ENCODE measurements at regions of chr15 and their contacts with region 1.

Region 1: GRCh38 chr15:92881802-92882696 is 18.1 kb upstream of the CHD2 start:
- DNase-seq: peak; percentile 99
- H3K4me3 Mint-ChIP-seq: peak overlapping the region; percentile 87
- H3K27ac Mint-ChIP-seq: peak overlapping the region; percentile 91
- H3K4me1 Mint-ChIP-seq: peaks cover 38% of the 10 kb centered on the region
- H3K27me3 Mint-ChIP-seq: no peaks in the 10 kb centered on the region

Region 2: DNA sequence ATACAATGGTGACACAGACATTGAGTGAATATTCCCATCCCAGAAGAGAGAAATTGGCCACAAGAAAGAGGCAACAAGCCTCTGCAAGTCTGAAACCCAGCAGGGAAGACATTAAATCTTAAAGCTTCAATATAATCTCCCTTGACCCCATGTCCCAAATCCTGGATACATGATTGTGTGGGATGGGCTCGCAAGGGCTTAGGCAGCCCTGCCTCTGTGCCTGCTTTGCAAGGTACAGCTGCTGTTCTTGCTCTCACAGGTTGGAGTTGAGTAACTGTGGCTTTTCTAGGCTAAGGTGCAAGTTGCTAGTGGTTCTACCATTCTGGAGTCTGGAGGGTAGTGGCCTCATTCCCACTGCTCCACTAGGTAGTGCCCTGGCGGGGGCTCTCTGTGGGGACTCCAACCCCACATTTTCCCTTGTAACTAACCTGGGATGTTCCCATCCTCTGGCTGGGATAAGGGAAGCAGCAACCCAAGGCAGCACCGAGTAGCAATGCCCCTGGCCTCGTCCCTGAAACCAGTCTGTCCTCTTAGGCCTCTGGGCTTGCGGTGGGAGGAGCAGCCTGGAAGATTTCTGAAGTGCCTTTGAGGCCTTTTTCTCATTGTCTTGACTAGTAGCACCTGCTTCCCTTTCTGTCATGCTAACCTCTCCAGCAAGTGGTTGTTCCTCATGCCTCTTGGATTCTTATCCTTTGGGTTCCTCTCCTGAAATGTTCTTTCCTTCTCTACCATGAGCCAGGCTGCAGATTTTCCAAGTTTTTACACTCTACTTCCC is 316.5 kb before region 1 on chr15:
- CTCF ChIA-PET with region 1: no interaction called
- POLR2A ChIA-PET with region 1: no interaction called
- DNase-seq: no peak
- H3K4me3 Mint-ChIP-seq: no peak overlapping the region
- H3K27ac Mint-ChIP-seq: no peak overlapping the region
- H3K4me1 Mint-ChIP-seq: no peaks in the 10 kb centered on the region
- H3K27me3 Mint-ChIP-seq: peaks cover 14% of the 10 kb centered on the region

Region 3: DNA sequence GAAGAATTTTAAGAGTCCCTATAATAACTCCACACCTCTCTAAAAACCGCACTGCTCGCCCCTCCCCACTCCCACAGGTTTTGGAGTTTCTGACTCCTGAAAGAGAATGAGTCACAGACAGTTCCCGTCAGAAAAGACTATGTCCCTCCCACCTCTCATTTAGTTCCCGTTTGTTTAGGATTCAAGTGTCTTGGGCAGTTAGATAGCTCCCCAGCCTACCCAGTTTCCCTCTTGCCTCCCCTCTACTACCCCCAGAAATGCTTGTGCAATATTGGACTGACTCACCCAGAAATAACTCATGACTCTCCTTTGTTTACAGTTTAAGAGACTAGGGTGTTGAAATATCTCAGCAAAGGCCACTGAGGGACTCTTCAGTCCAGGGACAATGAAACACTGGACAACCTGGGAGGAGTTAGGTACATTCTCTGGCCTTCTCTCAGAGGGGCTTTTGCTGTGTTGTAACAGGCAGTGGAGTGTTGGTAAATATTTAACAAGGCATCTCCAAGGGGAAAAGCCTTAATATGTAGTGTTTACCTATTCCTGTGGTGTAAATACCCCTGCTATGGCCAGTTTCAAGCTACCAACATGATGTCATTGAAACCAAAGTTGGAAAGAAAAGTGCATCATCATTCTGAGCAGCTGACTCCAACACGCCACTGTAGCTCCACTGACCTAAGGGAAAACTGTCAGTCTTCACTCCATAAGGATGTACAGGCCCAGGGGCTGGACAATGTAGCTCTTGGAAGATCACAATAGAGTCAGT is 78.0 kb before region 1 on chr15:
- CTCF ChIA-PET with region 1: interaction called, 114 read pairs
- POLR2A ChIA-PET with region 1: interaction called, 914 read pairs
- DNase-seq: peak; percentile 53
- H3K4me3 Mint-ChIP-seq: no peak overlapping the region
- H3K27ac Mint-ChIP-seq: peak overlapping the region; percentile 71
- H3K4me1 Mint-ChIP-seq: peaks cover 44% of the 10 kb centered on the region
- H3K27me3 Mint-ChIP-seq: no peaks in the 10 kb centered on the region

Region 4: DNA sequence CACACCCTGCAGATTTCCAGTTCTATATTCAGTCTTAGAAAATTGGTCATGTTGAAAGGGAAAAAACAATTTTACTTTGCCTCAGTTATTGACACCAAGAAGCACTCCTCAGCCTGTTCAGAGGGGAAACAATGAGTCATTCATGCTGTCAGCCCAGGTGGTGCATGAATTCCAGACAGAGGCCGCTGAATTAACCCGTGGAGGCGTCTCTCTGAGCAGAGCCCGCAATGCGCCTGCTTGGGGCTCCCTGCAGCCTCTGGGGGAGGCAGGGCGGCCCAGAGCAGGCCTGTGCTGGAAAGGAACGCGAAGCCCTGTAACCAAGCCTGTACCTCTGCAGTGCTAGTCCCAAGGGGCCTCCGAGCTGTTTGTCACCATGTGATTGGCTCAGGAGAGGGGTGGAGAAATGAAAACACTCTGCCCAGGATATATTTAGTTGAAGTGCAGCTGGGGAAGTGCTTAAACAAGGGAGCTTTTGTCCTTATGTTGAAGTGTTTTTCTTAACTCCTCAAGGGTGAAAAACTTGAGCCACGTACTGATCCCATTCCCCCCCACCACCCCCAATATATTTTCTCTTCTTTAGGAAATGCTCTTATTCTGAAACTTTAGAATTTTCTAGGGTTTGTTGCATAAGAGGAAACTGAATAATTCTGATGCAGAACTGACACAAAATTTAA is 50.3 kb before region 1 on chr15:
- CTCF ChIA-PET with region 1: interaction called, 24 read pairs
- POLR2A ChIA-PET with region 1: interaction called, 453 read pairs
- DNase-seq: peak; percentile 93
- H3K4me3 Mint-ChIP-seq: peak overlapping the region; percentile 60
- H3K27ac Mint-ChIP-seq: peak overlapping the region; percentile 94
- H3K4me1 Mint-ChIP-seq: peaks cover 53% of the 10 kb centered on the region
- H3K27me3 Mint-ChIP-seq: no peaks in the 10 kb centered on the region

Region 5: GRCh38 chr15:92845126-92845508 is 36.9 kb before region 1 on chr15:
- CTCF ChIA-PET with region 1: interaction called, 5 read pairs
- POLR2A ChIA-PET with region 1: interaction called, 131 read pairs
- DNase-seq: no peak
- H3K4me3 Mint-ChIP-seq: peak overlapping the region; percentile 58
- H3K27ac Mint-ChIP-seq: peak overlapping the region; percentile 96
- H3K4me1 Mint-ChIP-seq: peaks cover 61% of the 10 kb centered on the region
- H3K27me3 Mint-ChIP-seq: no peaks in the 10 kb centered on the region